ENCODE measurements at regions of chr7 and their contacts with region 1.

Region 1: DNA sequence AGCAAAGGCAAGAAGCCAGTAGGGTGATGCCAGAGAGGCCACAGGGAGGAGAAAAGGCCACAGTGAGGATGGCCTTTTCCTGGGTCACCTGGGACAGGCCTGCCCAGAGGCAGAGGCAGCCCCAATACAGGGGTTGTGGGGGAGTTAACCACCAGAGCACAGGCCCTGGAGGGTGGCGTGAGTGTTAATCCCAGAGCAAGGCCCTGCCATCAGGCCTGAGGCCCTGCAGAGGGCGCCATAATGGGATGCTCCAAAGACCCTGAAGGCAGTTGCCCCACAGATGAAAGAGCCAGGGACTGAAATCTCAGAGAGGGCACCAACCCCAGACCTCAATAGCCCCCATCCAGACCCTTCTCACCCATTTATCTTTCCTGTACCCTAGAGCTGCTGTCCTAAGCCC is 23.9 kb downstream of the SLC13A4 start:
- DNase-seq: peak; percentile 76
- ATAC-seq: peak; percentile 93
- H3K4me3 Mint-ChIP-seq: no peak overlapping the region
- H3K27ac Mint-ChIP-seq: no peak overlapping the region
- H3K4me1 Mint-ChIP-seq: no peaks in the 10 kb centered on the region; the same call in 1 of the 2 replicates
- H3K27me3 Mint-ChIP-seq: no peaks in the 10 kb centered on the region
- CTCF ChIP-seq: peak; percentile 75

Region 2: GRCh38 chr7:135562743-135563142 is 141.3 kb before region 1 on chr7:
- CTCF ChIA-PET with region 1: no interaction called
- POLR2A ChIA-PET with region 1: no interaction called
- DNase-seq: peak; percentile 24
- ATAC-seq: peak; percentile 46
- H3K4me3 Mint-ChIP-seq: peak overlapping the region; percentile 8
- H3K27ac Mint-ChIP-seq: peak overlapping the region; percentile 80
- H3K4me1 Mint-ChIP-seq: peaks cover 44% of the 10 kb centered on the region
- H3K27me3 Mint-ChIP-seq: no peaks in the 10 kb centered on the region
- CTCF ChIP-seq: no peak

Region 3: GRCh38 chr7:135684136-135684535 is 19.9 kb before region 1 on chr7:
- CTCF ChIA-PET with region 1: interaction called, 13 read pairs
- POLR2A ChIA-PET with region 1: interaction called, 3 read pairs
- DNase-seq: no peak
- ATAC-seq: peak; percentile 41
- H3K4me3 Mint-ChIP-seq: no peak overlapping the region
- H3K27ac Mint-ChIP-seq: no peak overlapping the region
- H3K4me1 Mint-ChIP-seq: peaks cover 13% of the 10 kb centered on the region
- H3K27me3 Mint-ChIP-seq: no peaks in the 10 kb centered on the region
- CTCF ChIP-seq: no peak

Region 4: GRCh38 chr7:135888740-135889139 is 184.7 kb after region 1 on chr7:
- CTCF ChIA-PET with region 1: no interaction called
- POLR2A ChIA-PET with region 1: no interaction called
- DNase-seq: no peak
- ATAC-seq: no peak
- H3K4me3 Mint-ChIP-seq: no peak overlapping the region
- H3K27ac Mint-ChIP-seq: no peak overlapping the region
- H3K4me1 Mint-ChIP-seq: no peaks in the 10 kb centered on the region
- H3K27me3 Mint-ChIP-seq: no peaks in the 10 kb centered on the region
- CTCF ChIP-seq: no peak

Region 5: DNA sequence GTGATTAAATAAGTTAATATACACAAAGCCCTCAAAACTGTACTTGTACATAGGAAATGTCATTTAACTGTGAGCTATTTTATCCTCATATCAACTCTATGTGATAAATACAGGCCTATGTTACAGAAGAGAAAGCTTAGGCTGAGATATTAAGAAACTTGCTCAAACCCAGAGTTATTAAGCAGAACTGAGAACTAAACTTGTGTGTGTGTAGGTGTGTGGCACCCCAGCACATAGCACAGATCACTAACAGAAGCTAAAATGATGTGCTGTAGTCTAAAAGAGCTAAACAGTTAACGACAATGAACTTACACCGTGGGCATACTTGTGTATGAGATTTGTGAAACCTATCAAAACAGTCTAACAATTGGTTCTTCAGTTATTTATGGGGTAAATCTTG is 238.5 kb after region 1 on chr7:
- CTCF ChIA-PET with region 1: no interaction called
- POLR2A ChIA-PET with region 1: no interaction called
- DNase-seq: no peak
- ATAC-seq: no peak
- H3K4me3 Mint-ChIP-seq: no peak overlapping the region
- H3K27ac Mint-ChIP-seq: no peak overlapping the region
- H3K4me1 Mint-ChIP-seq: peaks cover 43% of the 10 kb centered on the region
- H3K27me3 Mint-ChIP-seq: no peaks in the 10 kb centered on the region
- CTCF ChIP-seq: no peak

Region 6: DNA sequence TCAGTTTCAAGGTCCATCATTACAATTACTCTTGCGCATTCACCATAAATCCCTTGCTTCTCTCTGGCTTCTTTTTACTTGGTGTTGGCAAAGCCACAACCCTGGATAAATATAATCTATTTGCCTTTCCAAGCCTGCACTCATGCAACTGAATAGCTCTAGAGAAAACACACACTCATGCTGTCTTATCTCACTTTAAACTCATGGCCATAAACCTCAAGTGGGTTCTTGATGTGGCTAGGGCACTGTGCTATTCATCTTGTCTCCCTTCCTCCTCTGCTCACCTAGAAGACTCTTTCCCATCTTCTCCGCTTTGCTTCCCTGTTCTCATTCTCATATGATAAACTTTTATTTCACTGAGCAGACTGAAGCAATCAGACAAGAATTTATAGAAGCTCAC is 438.5 kb after region 1 on chr7:
- CTCF ChIA-PET with region 1: no interaction called
- POLR2A ChIA-PET with region 1: no interaction called
- DNase-seq: no peak
- ATAC-seq: no peak
- H3K4me3 Mint-ChIP-seq: no peak overlapping the region
- H3K27ac Mint-ChIP-seq: no peak overlapping the region
- H3K4me1 Mint-ChIP-seq: no peaks in the 10 kb centered on the region
- H3K27me3 Mint-ChIP-seq: no peaks in the 10 kb centered on the region
- CTCF ChIP-seq: no peak